PC-9 (cell line): ENCODE measurements at regions of chr7 and their contacts with region 1.

Region 1: DNA sequence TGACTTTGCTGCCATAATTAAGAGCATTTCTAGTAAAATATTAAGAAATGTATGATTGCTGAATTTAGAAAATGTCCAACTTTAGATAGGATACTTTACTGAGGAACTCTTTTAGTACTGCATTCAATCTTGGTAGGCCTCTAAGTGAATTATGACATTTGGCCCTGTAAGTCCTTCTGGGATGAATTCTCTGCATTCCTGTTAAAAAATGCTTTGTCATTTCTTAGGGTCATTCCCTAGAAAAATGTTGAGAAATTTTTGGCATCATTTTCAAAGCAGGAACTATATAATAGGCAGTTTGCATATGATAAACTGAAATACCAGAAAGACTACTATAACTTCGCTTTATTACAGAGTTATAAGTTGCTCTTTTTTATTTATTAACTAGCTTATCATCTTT is 69.3 kb upstream of the PRR15 start:
- DNase-seq: peak in 1 of 2 experiments; percentile 77
- H3K4me3 ChIP-seq: no peak overlapping the region
- H3K27ac ChIP-seq: peak overlapping the region; percentile 56
- H3K4me1 ChIP-seq: peaks cover 24% of the 10 kb centered on the region
- H3K27me3 ChIP-seq: no peaks in the 10 kb centered on the region
- CTCF ChIP-seq: no peak

Region 2: GRCh38 chr7:29508608-29509007 is 14.3 kb after region 1 on chr7:
- CTCF ChIA-PET with region 1: no interaction called
- POLR2A ChIA-PET with region 1: interaction called, 12 read pairs
- intact Hi-C with region 1: no loop called
- DNase-seq: no peak
- H3K4me3 ChIP-seq: no peak overlapping the region
- H3K27ac ChIP-seq: no peak overlapping the region
- H3K4me1 ChIP-seq: no peaks in the 10 kb centered on the region
- H3K27me3 ChIP-seq: no peaks in the 10 kb centered on the region
- CTCF ChIP-seq: no peak

Region 3: DNA sequence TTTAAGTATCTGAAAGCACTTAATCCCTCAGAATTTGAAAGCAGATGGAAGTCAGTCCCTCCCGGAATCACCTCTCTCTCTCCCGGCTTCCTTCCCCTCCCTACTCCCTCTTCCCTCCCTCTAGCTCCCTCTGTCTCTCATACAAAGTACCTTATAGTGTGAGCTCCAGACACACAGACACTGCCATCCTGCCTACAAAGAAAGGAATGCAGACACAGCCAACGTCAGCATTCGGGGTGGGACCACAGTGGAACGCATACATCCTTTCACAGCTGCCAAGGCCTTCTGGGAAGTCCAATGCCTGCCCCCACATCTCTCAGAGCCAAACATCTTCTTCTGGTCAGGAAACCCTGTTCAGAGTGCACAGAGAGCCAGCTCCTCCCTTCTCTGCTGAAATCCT is 975.0 kb after region 1 on chr7:
- CTCF ChIA-PET with region 1: no interaction called
- POLR2A ChIA-PET with region 1: no interaction called
- intact Hi-C with region 1: no loop called
- DNase-seq: peak in 1 of 2 experiments; percentile 49
- H3K4me3 ChIP-seq: no peak overlapping the region
- H3K27ac ChIP-seq: no peak overlapping the region
- H3K4me1 ChIP-seq: peaks cover 18% of the 10 kb centered on the region
- H3K27me3 ChIP-seq: no peaks in the 10 kb centered on the region
- CTCF ChIP-seq: no peak